ENCODE measurements at regions of chr2 and their contacts with region 1.

Region 1: GRCh38 chr2:129923265-129924091 is 56.0 kb upstream of the RAB6C start:
- DNase-seq: peak; percentile 66
- H3K4me3 Mint-ChIP-seq: peak overlapping the region; percentile 51
- H3K27ac Mint-ChIP-seq: no peak overlapping the region
- H3K4me1 Mint-ChIP-seq: peaks cover 5% of the 10 kb centered on the region
- H3K27me3 Mint-ChIP-seq: peaks cover 31% of the 10 kb centered on the region
- CTCF ChIP-seq: peak; percentile 38

Region 2: GRCh38 chr2:128178650-128179460 is 1744.6 kb before region 1 on chr2:
- CTCF ChIA-PET with region 1: interaction called, 5 read pairs
- POLR2A ChIA-PET with region 1: no interaction called
- intact Hi-C with region 1: loop called (anchors 5 kb)
- DNase-seq: peak; percentile 68
- H3K4me3 Mint-ChIP-seq: no peak overlapping the region
- H3K27ac Mint-ChIP-seq: no peak overlapping the region
- H3K4me1 Mint-ChIP-seq: no peaks in the 10 kb centered on the region
- H3K27me3 Mint-ChIP-seq: no peaks in the 10 kb centered on the region
- CTCF ChIP-seq: peak; percentile 68

Region 3: DNA sequence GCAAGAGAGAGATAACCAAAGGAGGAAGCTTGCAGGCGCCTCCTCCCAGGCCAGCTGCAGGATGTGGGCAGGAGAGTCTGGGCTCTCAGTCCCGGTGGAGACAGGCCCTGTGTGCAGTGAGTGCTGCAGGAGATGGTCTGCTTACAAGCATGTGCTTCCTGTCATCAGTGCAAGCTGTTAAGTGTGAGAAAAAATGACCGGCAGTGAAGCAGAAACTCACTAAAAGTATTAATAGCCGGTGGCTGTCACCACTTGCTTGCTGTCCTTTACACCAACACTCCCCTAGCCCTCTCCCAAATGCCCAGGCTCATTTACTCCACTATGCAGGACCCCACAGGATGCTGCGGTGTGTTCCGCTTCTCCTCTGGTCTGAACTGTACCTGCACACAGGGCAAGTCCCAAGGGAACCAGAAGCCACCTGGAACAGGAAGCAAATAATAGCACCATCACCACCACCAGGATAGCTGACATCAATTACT is 1169.2 kb before region 1 on chr2:
- CTCF ChIA-PET with region 1: no interaction called
- POLR2A ChIA-PET with region 1: no interaction called
- intact Hi-C with region 1: loop called (anchors 10 kb)
- DNase-seq: no peak
- H3K4me3 Mint-ChIP-seq: no peak overlapping the region
- H3K27ac Mint-ChIP-seq: no peak overlapping the region
- H3K4me1 Mint-ChIP-seq: peaks cover 5% of the 10 kb centered on the region
- H3K27me3 Mint-ChIP-seq: no peaks in the 10 kb centered on the region
- CTCF ChIP-seq: no peak

Region 4: GRCh38 chr2:129396980-129397599 is 526.4 kb before region 1 on chr2:
- CTCF ChIA-PET with region 1: interaction called, 3 read pairs
- POLR2A ChIA-PET with region 1: no interaction called
- intact Hi-C with region 1: loop called (anchors 1 kb)
- DNase-seq: peak; percentile 43
- H3K4me3 Mint-ChIP-seq: no peak overlapping the region
- H3K27ac Mint-ChIP-seq: no peak overlapping the region
- H3K4me1 Mint-ChIP-seq: no peaks in the 10 kb centered on the region
- H3K27me3 Mint-ChIP-seq: no peaks in the 10 kb centered on the region
- CTCF ChIP-seq: peak; percentile 82

Region 5: DNA sequence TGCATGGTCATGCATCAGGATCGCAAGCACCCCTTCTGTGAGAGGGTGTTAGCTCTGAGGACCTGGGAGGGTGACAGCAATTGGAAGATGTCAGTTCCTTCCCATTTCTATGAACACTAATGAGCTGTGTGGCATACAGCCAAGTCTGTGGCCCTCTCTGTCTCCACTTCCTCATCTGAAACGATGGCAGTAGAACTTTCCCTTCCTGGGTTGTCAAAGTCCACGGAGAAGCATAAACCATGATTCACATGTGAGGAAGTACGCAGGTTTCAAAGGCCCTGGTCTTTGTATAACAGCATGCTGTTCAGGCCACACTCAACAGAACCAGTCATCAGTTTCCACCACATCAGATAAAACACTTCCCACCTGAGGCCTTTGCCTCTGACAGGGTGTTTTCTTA is 111.4 kb before region 1 on chr2:
- CTCF ChIA-PET with region 1: no interaction called
- POLR2A ChIA-PET with region 1: no interaction called
- intact Hi-C with region 1: no loop called
- DNase-seq: no peak
- H3K4me3 Mint-ChIP-seq: no peak overlapping the region
- H3K27ac Mint-ChIP-seq: no peak overlapping the region
- H3K4me1 Mint-ChIP-seq: no peaks in the 10 kb centered on the region
- H3K27me3 Mint-ChIP-seq: peaks cover 7% of the 10 kb centered on the region
- CTCF ChIP-seq: no peak

Region 6: GRCh38 chr2:130332271-130333073 is 409.0 kb after region 1 on chr2:
- CTCF ChIA-PET with region 1: interaction called, 4 read pairs
- POLR2A ChIA-PET with region 1: no interaction called
- intact Hi-C with region 1: loop called (anchors 5 kb)
- DNase-seq: peak; percentile 84
- H3K4me3 Mint-ChIP-seq: no peak overlapping the region
- H3K27ac Mint-ChIP-seq: no peak overlapping the region
- H3K4me1 Mint-ChIP-seq: peaks cover 15% of the 10 kb centered on the region
- H3K27me3 Mint-ChIP-seq: no peaks in the 10 kb centered on the region
- CTCF ChIP-seq: peak; percentile 95

Measured in MCF 10A (cell line).